T-cell (primary cell): ENCODE measurements at regions of chr20 and their contacts with region 1.

Region 1: GRCh38 chr20:37095599-37096414 is at the start of gene RBL1:
- DNase-seq: peak; percentile 72 to 89 (median 82)
- ATAC-seq: peak; percentile 85 to 88 (median 86)
- H3K4me3 ChIP-seq: peak within 1 kb of the TSS; percentile 72 to 84
- H3K4me3 Mint-ChIP-seq: peak within 1 kb of the TSS; percentile 95 to 99 (median 99)
- H3K27ac ChIP-seq: peak within 1 kb of the TSS; percentile 84
- H3K27ac Mint-ChIP-seq: peak within 1 kb of the TSS; percentile 99 to 100
- H3K4me1 ChIP-seq: peaks cover 3 to 30% of the 10 kb centered on the region in 2 experiments
- H3K4me1 Mint-ChIP-seq: peaks cover 28 to 40% (median 35%) of the 10 kb centered on the region in 3 donors
- H3K27me3 ChIP-seq: no peaks in the 10 kb centered on the region
- H3K27me3 Mint-ChIP-seq: no peaks in the 10 kb centered on the region
- total RNA-seq, gene RBL1: 24.3 to 29.7 (median 28.2) TPM

Region 2: GRCh38 chr20:36709126-36709525 is 386.7 kb before region 1 on chr20:
- CTCF ChIA-PET with region 1: no interaction called
- POLR2A ChIA-PET with region 1: no interaction called
- DNase-seq: no peak
- ATAC-seq: no peak
- H3K4me3 ChIP-seq: no peak overlapping the region
- H3K4me3 Mint-ChIP-seq: no peak overlapping the region
- H3K27ac ChIP-seq: no peak overlapping the region
- H3K27ac Mint-ChIP-seq: no peak overlapping the region
- H3K4me1 ChIP-seq: no peaks in the 10 kb centered on the region
- H3K4me1 Mint-ChIP-seq: no peaks in the 10 kb centered on the region
- H3K27me3 ChIP-seq: no peaks in the 10 kb centered on the region
- H3K27me3 Mint-ChIP-seq: no peaks in the 10 kb centered on the region

Region 3: DNA sequence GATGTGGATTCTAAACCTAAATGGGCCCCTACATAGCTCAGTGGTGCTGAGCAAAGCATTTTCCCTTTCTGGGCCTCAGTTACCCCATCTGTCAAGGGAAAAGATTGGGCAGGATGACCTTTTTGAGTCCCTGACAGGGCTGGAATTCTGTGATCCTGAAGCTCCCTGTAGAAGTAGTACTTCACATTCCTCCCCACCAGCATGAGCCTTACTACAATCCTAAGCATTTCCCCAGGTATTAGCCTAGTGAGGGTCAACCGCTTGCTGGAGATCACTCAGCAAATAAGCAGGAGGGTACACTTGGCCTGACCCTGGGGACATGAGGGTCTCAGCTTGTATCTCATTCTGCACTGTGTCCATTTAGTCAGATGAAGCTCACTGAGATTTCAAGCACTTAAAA is 363.4 kb before region 1 on chr20:
- CTCF ChIA-PET with region 1: no interaction called
- POLR2A ChIA-PET with region 1: interaction called in 1 of 2 experiments, 11 read pairs
- DNase-seq: no peak
- ATAC-seq: no peak
- H3K4me3 ChIP-seq: no peak overlapping the region
- H3K4me3 Mint-ChIP-seq: peak overlapping the region in 1 of 3 donors; percentile 79
- H3K27ac ChIP-seq: peak overlapping the region; percentile 58
- H3K27ac Mint-ChIP-seq: peak overlapping the region; percentile 75 to 83
- H3K4me1 ChIP-seq: peaks cover 3 to 23% of the 10 kb centered on the region in 2 experiments
- H3K4me1 Mint-ChIP-seq: peaks cover 31 to 46% (median 35%) of the 10 kb centered on the region in 3 donors
- H3K27me3 ChIP-seq: no peaks in the 10 kb centered on the region
- H3K27me3 Mint-ChIP-seq: no peaks in the 10 kb centered on the region

Region 4: GRCh38 chr20:36988494-36988966 is 107.3 kb before region 1 on chr20:
- CTCF ChIA-PET with region 1: no interaction called
- POLR2A ChIA-PET with region 1: interaction called in 1 of 2 experiments, 11 read pairs
- DNase-seq: peak in 29 of 35 experiments; percentile 13 to 59 (median 32)
- ATAC-seq: peak; percentile 84 to 91 (median 85)
- H3K4me3 ChIP-seq: no peak overlapping the region
- H3K4me3 Mint-ChIP-seq: peak overlapping the region in 2 of 3 donors; percentile 15 to 46
- H3K27ac ChIP-seq: peak overlapping the region; percentile 43
- H3K27ac Mint-ChIP-seq: peak overlapping the region; percentile 89 to 93
- H3K4me1 ChIP-seq: peaks cover 15 to 31% of the 10 kb centered on the region in 2 experiments
- H3K4me1 Mint-ChIP-seq: peaks cover 44 to 52% (median 45%) of the 10 kb centered on the region in 3 donors
- H3K27me3 ChIP-seq: no peaks in the 10 kb centered on the region
- H3K27me3 Mint-ChIP-seq: no peaks in the 10 kb centered on the region

Region 5: DNA sequence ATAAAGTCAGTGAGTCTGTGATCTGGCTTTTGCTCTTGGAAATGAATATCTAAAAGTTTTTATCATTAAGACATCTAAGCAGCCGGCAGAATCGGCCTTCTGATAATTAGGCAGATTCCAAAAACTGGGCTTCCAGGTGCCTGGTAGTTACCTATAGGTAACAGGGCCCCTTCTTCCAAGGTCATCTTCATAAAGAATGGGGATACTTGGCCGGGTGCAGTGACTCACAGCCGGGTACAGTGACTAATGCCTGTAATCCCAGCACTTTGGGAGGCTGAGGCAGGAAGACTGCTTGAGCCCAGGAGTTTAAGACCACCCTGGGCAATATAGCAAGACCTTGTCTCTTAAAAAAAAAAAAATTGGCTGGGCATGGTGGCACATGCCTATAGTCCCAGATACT is 12.9 kb after region 1 on chr20:
- CTCF ChIA-PET with region 1: no interaction called
- POLR2A ChIA-PET with region 1: no interaction called
- DNase-seq: no peak
- ATAC-seq: no peak
- H3K4me3 ChIP-seq: no peak overlapping the region
- H3K4me3 Mint-ChIP-seq: no peak overlapping the region
- H3K27ac ChIP-seq: no peak overlapping the region
- H3K27ac Mint-ChIP-seq: no peak overlapping the region
- H3K4me1 ChIP-seq: no peaks in the 10 kb centered on the region
- H3K4me1 Mint-ChIP-seq: no peaks in the 10 kb centered on the region
- H3K27me3 ChIP-seq: no peaks in the 10 kb centered on the region
- H3K27me3 Mint-ChIP-seq: no peaks in the 10 kb centered on the region

Region 6: GRCh38 chr20:37833221-37833896 is 737.6 kb after region 1 on chr20:
- CTCF ChIA-PET with region 1: no interaction called
- POLR2A ChIA-PET with region 1: no interaction called
- DNase-seq: no peak
- ATAC-seq: no peak
- H3K4me3 ChIP-seq: no peak overlapping the region
- H3K4me3 Mint-ChIP-seq: no peak overlapping the region
- H3K27ac ChIP-seq: no peak overlapping the region
- H3K27ac Mint-ChIP-seq: no peak overlapping the region
- H3K4me1 ChIP-seq: no peaks in the 10 kb centered on the region
- H3K4me1 Mint-ChIP-seq: peaks cover 0 to 7% (median 3%) of the 10 kb centered on the region in 3 donors
- H3K27me3 ChIP-seq: no peaks in the 10 kb centered on the region
- H3K27me3 Mint-ChIP-seq: no peaks in the 10 kb centered on the region